Sciatic nerve (tissue), 2 donors: ENCODE measurements at regions of chr19 and their contacts with region 1.

Region 1: DNA sequence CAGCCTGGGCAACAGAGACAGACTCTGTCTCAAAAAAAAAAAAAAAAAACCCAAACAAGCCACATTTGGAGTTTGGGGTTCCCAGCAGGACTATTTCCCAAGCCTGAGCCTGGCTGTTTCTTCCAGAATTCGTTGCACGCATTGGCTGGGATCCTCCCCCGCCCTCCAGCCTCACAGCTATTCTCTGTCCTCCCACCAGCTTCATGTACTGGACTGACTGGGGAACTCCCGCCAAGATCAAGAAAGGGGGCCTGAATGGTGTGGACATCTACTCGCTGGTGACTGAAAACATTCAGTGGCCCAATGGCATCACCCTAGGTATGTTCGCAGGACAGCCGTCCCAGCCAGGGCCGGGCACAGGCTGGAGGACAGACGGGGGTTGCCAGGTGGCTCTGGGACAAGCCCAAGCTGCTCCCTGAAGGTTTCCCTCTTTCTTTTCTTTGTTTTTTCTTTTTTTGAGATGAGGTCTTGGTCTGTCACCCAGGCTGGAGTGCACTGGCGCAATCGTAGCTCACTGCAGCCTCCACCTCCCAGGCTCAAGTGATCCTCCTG is 26.7 kb downstream of the LDLR start:
- DNase-seq: no peak
- ATAC-seq: peak; percentile 22

Region 2: DNA sequence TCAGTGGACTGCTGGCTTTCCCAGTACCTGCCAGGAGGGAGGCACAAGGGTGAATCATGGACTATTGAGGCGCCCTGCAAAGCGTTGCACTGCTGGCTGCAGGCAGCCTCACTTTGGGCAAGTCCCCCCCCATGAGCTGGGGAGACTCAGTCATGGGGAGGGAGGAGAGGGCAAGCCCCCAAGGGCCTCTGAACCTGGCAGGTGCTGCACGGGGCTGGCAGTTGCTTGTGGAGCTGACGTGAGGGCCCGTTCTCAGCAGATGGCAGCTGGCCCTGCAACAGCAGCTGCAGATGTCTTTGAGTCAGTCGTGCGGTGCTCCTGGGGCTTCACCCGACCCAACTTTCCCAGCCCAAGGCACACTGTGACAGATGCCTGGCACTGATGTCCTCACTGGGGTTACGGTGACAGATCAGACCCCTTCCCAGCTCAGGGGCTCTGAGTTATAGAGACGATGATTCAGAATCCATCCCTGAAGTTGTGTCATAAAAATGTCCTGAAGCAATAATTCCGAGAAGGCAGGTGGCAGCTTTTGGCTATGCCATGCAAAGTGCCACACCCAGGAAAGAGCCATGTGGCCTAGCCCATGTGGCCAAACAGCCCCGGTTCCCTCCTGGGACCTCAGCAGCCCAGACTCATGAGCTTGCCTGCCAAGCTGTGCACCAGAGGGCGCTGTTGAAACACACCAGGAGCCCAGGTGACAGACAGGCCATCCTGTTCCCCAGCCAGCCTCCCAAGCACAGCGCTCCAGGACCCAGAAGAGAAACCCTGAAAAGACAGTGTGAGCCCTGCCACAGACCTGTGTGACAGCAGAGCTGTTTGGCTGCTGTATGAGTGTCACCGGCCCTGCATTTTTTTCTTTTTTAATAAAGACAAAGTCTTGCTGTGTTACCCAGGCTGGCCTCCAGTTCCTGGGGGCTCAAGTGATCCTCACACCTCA is 80.3 kb before region 1 on chr19:
- intact Hi-C with region 1: loop called (anchors 5 kb)
- DNase-seq: peak; percentile 95
- ATAC-seq: peak; percentile 95

Region 3: DNA sequence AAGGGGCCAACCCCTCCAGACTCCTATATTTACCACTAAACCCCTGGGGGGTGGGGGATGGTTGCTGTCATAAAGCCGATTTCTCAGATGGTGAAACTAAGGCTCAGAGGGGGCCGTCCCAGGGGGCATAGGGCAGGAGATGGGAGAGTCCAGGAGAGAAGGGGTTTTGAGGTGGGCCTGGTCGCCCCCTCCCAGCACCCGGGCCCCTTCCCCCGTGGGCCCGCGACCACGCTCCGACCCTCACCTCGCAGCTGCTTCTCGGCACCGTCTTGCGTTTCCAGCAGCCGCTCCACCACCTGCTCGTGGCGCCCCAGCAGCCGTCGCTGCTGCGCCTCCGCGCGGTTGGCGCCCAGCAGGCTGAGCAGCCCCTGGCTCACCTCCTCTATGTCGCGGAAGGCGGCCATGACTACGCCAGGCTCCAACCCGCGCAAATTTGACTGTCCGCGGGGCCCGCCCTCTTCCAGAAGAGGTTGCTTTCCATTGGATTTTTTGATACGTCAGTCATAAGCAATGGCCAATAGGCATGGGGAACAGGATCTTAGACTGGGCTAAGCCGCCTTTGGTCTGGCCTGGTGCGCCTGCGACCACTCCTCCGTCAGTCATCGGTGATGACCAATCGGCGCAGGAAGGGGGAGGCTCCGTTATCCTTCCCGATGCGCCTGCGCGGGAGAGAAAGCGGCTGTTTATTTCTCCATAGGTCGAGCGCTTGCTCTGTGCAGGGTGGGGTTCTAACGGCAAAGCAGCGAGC is 39.6 kb after region 1 on chr19 and contains the start of gene SPC24:
- intact Hi-C with region 1: no loop called
- DNase-seq: peak; percentile 96
- ATAC-seq: peak; percentile 94
- total RNA-seq, gene SPC24: 1.3 TPM